ENCODE measurements at regions of chr1 and their contacts with region 1.

Region 1: DNA sequence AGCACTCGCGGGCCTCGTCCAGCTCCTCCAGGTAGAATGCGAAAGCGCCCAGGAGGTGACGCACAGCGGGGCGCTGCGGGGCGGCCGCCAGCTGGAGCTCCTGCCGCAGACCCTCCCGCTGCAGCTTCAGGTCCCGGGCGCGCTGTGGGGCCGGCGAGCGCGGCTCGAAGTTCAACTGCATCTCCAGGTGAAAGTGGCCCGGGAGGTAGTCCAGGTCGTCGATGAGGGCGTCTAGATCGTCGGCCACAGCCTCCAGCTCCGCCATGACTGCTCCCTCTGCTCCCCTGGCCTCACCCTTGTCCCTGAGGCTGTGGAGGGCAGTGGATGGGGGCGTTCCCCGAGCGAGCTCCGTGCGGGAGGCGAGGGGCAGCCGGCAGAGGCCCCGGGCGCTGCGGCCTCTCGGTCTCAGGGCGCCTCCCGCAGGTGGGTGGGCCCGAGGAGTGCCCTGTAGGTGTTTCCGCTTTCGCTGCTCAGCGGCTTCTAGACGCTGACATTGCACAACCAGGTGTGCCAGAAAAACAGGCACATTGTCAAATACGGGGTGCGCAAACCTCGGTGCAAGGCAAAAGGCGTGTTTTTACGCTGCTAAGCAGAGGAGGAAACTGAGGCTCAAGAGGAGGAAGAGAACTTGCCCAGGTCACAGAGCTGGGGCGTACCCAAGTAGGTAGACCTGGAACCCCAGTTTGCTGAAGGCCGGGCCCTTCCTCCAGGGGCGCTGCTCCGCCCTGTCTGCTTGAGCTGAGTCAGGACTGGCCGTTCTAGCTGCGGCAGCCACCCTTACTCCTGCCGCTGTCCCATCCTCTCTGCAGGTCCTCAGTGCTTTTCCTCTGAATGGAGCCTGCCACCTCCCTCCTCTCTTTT is at the start of gene TTC22:
- DNase-seq: peak; percentile 72
- H3K4me3 ChIP-seq: peak within 1 kb of the TSS; percentile 48 to 62 (median 59)
- H3K27ac ChIP-seq: no peak within 1 kb of the TSS
- H3K4me1 ChIP-seq: peaks cover 33% of the 10 kb centered on the region
- H3K27me3 ChIP-seq: no peaks in the 10 kb centered on the region
- CTCF ChIP-seq: peak; percentile 59 to 80
- total RNA-seq, gene TTC22: 7.9 to 13.3 TPM

Region 2: GRCh38 chr1:53498555-53499142 is 1302.5 kb before region 1 on chr1:
- CTCF ChIA-PET with region 1: no interaction called
- dilution Hi-C with region 1: no loop called
- in situ Hi-C with region 1: no loop called
- intact Hi-C with region 1: no loop called
- DNase-seq: no peak
- H3K4me3 ChIP-seq: no peak overlapping the region
- H3K27ac ChIP-seq: no peak overlapping the region
- H3K4me1 ChIP-seq: no peaks in the 10 kb centered on the region
- H3K27me3 ChIP-seq: peaks cover 3% of the 10 kb centered on the region
- CTCF ChIP-seq: no peak

Region 3: DNA sequence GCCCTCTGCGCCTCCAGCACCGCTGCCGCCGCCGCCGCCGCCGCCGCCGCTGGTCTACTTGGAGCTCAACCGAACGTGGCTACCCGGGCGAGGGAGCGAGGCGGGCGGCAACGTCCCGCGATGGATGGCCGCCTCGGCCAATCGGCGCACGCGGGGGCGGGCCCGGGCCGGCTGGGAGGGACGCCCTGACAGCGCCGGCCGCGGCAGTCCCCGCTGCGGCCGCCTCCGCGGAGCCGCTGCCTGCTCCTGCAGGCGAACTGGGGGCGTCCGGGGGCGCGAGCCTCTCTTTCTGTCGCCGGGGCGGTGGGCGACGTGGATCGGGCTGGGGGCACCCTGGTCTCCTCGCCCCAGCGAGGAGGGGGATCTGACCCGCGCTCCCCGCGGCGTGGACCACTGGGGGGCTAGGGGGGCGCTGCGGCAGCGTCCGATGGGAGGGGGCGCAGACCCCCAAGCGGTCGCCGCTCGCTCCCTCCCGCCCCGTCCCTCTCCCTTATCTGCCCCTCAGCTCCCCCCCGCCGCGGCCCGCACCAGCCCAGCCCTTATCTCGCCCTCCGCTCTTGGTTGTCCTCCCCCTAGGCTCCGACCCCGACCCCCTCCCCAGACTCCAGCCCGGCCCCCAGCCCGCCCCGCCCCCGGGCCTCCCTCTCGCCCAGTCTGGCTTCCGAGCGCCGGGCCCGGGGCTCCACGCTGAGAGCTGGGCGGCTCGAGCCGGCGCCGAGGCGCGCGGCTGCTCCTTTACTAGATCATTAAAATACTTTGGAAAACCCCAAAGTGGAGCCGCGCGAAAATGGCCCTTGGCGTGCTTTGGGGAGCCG is 394.6 kb before region 1 on chr1 and contains the start of gene SSBP3:
- CTCF ChIA-PET with region 1: no interaction called
- dilution Hi-C with region 1: no loop called
- in situ Hi-C with region 1: no loop called
- intact Hi-C with region 1: loop called (anchors 5 kb)
- DNase-seq: peak; percentile 95
- H3K4me3 ChIP-seq: peak within 1 kb of the TSS; percentile 60 to 86 (median 64)
- H3K27ac ChIP-seq: peak within 1 kb of the TSS; percentile 84
- H3K4me1 ChIP-seq: peaks cover 49% of the 10 kb centered on the region
- H3K27me3 ChIP-seq: no peaks in the 10 kb centered on the region
- CTCF ChIP-seq: peak in 1 of 2 donors; percentile 2
- total RNA-seq, gene SSBP3: 30.5 to 30.6 TPM

Region 4: DNA sequence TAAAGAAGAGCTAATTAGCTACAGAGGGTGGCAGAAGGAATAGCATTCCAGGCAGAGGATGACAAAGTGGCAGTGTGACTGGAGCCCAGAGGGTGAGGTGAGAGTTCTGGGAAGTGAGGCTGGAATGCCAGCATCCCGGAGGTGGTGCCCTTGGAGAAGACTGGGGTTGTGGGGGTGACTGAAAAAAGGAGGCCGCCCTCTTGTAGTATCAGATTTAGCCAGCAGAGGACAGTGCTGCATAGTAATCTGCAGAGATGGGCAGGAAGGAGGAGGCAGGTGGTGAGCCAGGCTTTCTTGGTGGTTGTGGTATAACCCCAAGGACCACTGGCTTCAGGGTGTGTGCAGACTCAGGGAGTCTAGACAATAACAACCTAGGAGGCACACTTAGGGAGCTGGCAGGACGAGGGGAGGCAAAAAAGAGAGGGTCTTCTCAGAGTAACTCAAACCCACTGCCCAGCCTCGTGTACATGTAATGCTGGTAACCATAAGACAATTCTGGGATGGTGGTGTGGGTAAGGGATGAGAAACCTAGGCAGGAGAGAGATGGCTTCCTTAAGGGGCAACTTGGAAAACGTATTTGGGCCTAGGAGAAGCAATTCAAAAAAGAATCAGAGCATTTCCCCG is 129.0 kb before region 1 on chr1:
- CTCF ChIA-PET with region 1: interaction called, 3 read pairs
- dilution Hi-C with region 1: loop called (anchors 5 kb)
- in situ Hi-C with region 1: no loop called
- intact Hi-C with region 1: loop called (anchors 2 kb)
- DNase-seq: peak; percentile 41
- H3K4me3 ChIP-seq: no peak overlapping the region
- H3K27ac ChIP-seq: no peak overlapping the region
- H3K4me1 ChIP-seq: no peaks in the 10 kb centered on the region
- H3K27me3 ChIP-seq: peaks cover 3% of the 10 kb centered on the region
- CTCF ChIP-seq: peak; percentile 94 to 96

Region 5: DNA sequence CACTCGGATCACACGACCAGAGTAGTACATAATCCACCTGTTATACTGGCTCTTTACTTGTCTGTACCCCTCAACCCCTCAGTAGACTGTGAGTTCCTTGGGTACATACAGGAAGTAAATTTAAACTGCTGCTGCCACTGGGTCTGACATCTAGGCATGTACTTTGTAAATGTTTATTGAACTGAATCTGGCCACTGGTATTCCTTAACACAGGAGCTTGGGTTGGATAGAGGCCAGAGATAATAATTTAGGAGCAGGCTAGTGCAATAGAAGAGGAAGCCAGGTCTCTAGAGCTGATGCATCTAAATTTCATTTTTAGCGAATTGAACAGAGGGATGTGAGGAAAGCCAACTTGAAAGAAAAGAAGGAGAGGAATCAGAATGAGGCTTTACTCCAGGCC is 73.1 kb before region 1 on chr1:
- CTCF ChIA-PET with region 1: interaction called, 4 read pairs
- dilution Hi-C with region 1: loop called (anchors 5 kb)
- in situ Hi-C with region 1: no loop called
- intact Hi-C with region 1: no loop called
- DNase-seq: no peak
- H3K4me3 ChIP-seq: no peak overlapping the region
- H3K27ac ChIP-seq: no peak overlapping the region
- H3K4me1 ChIP-seq: no peaks in the 10 kb centered on the region
- H3K27me3 ChIP-seq: no peaks in the 10 kb centered on the region
- CTCF ChIP-seq: no peak

Region 6: GRCh38 chr1:54764133-54764921 is 36.8 kb before region 1 on chr1 and contains the start of gene PARS2:
- CTCF ChIA-PET with region 1: no interaction called
- dilution Hi-C with region 1: loop called (anchors 5 kb)
- in situ Hi-C with region 1: no loop called
- intact Hi-C with region 1: loop called (anchors 2 kb)
- DNase-seq: peak; percentile 99
- H3K4me3 ChIP-seq: peak within 1 kb of the TSS; percentile 80 to 97 (median 96)
- H3K27ac ChIP-seq: peak within 1 kb of the TSS; percentile 73
- H3K4me1 ChIP-seq: peaks cover 8% of the 10 kb centered on the region
- H3K27me3 ChIP-seq: no peaks in the 10 kb centered on the region
- CTCF ChIP-seq: no peak
- total RNA-seq, gene PARS2: 4.5 to 10.3 TPM

Region 7: GRCh38 chr1:55007625-55008024 is 206.5 kb after region 1 on chr1:
- CTCF ChIA-PET with region 1: no interaction called
- dilution Hi-C with region 1: no loop called
- in situ Hi-C with region 1: no loop called
- intact Hi-C with region 1: no loop called
- DNase-seq: peak; percentile 79
- H3K4me3 ChIP-seq: no peak overlapping the region
- H3K27ac ChIP-seq: peak overlapping the region; percentile 14
- H3K4me1 ChIP-seq: peaks cover 14% of the 10 kb centered on the region
- H3K27me3 ChIP-seq: no peaks in the 10 kb centered on the region
- CTCF ChIP-seq: no peak